RWPE1 (cell line): ENCODE measurements at regions of chr9 and their contacts with region 1.

Region 1: DNA sequence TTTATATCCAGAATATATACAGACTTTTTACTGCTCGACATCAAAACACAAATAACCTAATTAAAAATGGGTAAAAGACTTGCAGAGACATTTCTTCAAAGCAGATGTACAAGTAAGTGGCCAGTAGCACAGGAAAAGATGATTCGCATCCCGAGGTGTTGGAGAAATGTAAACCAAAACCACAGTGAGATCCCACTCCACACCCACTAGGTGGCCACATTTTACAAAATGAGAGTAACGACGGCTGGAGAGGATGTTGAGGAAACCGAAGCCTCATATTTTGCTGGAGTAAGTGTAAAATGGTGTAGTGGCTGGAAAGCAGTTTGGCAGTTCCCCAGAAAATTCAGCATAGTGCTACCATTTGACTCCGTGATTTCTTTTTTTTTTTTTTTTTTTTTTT is 21.2 kb upstream of the GBGT1 start:
- DNase-seq: peak; percentile 93
- H3K27ac ChIP-seq: no peak overlapping the region
- CTCF ChIP-seq: peak; percentile 85

Region 2: DNA sequence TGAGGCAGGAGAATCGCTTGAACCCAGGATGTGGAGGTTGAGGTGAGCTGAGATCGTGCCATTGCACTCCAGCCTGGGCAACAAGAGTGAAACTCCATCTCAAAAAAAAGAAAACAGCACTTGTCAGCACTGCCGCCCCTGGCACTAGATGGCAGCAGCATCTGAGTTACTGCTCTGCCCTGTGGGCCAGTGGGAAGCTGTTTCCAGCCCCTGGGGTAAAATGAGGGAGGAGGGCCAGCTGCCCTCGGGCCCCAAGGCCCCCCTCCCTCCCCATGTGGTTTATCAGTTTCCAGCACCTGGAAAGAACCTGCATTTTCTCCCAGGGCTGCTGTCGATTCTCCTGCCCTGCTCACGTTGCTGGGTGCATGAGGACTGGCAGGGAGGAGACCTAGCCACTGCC is 136.4 kb before region 1 on chr9:
- CTCF ChIA-PET with region 1: interaction called, 10 read pairs
- POLR2A ChIA-PET with region 1: no interaction called
- DNase-seq: peak; percentile 64
- H3K27ac ChIP-seq: peak overlapping the region; percentile 43
- CTCF ChIP-seq: peak; percentile 72

Region 3: DNA sequence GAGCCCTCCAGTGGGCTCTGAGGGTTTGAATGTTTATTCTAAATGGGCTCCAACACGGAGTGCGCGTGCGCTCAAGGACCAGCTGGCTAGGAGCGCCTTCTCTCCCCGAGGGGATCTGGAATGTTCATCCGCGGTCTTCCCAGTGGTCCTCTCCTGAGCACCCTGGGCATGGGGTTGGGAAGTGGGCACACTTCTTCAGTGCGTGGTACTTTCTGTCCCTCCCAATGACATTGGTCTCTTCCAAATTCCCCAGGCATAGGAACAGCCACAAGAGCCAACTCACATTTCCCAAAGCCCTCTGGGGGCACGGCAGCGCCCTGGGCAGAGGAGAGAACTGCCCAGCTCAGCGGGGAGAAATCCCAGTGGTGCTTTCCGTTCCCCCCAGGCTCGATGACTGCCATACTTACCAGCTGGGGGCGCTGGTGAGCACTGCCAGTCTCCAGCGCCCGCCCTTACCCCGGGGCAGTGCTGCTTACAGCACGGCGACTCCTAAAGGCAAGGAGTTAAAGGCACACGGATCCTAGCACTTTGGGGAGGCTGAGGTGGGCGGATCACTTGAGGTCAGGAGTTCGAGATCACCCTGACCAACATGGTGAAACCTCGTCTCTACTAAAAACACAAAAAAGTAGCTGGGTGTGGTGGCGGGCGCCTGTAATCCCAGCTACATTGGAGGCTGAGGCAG is 54.0 kb after region 1 on chr9:
- CTCF ChIA-PET with region 1: interaction called, 19 read pairs
- POLR2A ChIA-PET with region 1: no interaction called
- DNase-seq: peak; percentile 61
- H3K27ac ChIP-seq: no peak overlapping the region
- CTCF ChIP-seq: peak; percentile 48

Region 4: GRCh38 chr9:133320421-133320881 is 135.5 kb after region 1 on chr9:
- CTCF ChIA-PET with region 1: interaction called, 10 read pairs
- POLR2A ChIA-PET with region 1: no interaction called
- DNase-seq: no peak
- H3K27ac ChIP-seq: no peak overlapping the region
- CTCF ChIP-seq: no peak

Region 5: DNA sequence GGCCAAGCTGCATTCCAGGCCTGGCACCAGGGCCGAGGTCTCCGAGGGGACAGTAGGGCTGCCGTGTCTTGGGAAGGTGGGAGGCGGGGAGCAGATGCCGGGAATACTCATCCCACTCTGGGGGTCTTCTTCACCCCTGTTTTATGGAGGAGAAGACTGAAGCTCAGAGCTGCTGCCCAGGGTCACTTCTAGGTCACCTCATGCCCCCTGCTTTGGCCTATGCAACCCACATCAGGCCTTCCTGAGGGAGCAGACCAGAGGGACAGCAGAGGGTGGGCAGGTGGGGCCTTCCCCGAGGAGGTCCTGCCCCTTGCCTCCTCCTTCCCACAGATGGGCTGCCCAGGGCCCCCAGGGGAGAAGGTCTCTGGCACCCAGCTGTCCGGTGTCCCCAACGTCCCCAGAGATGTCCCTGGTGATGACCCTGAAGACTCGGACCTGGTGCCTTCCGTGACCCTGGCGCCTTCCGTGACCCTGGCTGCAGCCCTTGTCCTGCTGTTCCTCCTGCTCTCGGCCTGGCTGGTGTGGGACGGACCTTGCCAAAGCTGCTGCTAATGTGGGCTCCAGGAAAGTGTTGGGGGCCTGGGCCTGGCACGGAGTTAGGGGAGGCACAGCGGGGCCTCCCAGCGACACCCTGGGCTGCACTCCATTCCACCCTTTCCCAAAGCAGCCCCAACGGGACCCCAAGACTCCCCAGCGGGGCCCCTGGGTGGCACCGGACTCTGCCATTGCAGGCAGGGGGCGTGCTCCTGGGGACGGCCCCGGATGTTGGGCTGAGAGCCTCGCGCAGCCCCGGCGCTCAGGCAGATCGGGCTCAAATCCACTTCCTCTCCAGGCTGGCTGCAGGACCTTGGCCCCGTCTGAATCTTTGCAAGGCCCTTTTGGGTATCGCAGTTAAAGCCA is 300.6 kb after region 1 on chr9:
- CTCF ChIA-PET with region 1: interaction called, 11 read pairs
- POLR2A ChIA-PET with region 1: no interaction called
- DNase-seq: no peak
- H3K27ac ChIP-seq: no peak overlapping the region
- CTCF ChIP-seq: no peak